Activated CD4-positive, alpha-beta T cell treated with anti-CD3 and anti-CD28 coated beads, Interleukin-2, amount 10 ng/mL, durations not matched to agents 24 days and 14 days (primary cell): ENCODE measurements at regions of chr5 and their contacts with region 1.

Region 1: DNA sequence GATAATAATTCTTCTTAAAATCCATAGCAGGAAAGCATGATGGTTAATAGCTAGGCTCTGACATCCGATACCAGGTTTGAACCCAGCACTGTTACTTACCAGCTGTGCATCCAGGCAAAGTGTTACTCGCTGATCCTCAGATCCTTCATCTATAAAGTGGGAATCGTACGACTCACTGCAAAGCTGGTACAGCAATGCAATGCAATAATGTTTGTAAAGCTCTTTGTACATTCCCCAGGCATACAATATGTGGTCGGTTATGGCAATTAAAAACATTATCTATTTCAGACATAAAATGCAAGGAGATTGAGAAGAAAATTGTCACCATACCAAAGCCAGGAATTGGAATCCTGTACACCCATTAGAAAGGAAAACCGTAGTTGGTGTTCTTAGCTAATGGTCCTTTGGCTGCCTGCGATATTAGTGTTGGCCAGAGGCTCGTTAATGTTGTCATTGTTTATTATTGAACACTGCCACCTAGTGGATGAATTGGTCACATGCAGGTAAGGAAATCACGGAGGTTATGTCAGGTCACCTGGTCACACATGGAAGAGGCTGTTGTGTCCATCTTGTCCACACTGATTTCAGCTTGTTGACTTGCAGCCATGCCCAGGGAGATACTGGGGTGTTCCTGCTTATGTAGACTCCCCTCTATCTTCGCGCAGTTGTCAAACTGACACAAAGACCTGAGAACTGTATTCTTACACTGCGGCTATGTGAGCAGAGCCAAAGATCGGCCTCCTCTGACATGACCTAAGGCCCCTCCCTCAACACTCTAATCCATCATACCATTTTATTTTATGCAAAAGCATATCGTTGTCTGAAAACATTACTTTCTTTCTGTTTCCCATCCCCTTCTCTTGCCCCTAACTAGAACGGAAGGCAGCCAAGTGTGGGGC is 87.5 kb upstream of the PPP2R2B start:
- DNase-seq: peak; percentile 86
- H3K4me3 Mint-ChIP-seq: no peak overlapping the region
- H3K27ac Mint-ChIP-seq: no peak overlapping the region
- H3K4me1 Mint-ChIP-seq: no peaks in the 10 kb centered on the region
- H3K27me3 Mint-ChIP-seq: no peaks in the 10 kb centered on the region

Region 2: DNA sequence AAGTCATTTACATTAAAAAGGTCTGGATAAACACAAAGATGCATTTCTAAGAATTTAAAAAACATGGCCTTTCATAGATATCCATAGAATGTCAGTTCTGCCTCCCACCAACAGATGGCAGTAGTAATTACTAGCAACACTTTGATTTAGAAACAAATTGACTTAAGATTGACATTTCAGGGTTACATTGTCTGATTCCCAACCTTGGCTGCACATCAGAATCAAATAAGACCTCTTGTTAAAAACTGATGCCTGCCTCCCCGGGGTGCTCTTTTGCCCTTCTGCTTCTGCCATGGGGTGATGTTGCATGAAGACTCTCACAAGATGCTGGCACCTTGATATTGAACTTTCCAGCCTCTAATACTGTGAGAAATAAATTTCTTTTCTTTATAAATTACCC is 303.8 kb before region 1 on chr5:
- intact Hi-C with region 1: loop called (anchors 1 kb)
- DNase-seq: peak; percentile 78
- H3K4me3 Mint-ChIP-seq: no peak overlapping the region
- H3K27ac Mint-ChIP-seq: no peak overlapping the region
- H3K4me1 Mint-ChIP-seq: no peaks in the 10 kb centered on the region
- H3K27me3 Mint-ChIP-seq: no peaks in the 10 kb centered on the region

Region 3: DNA sequence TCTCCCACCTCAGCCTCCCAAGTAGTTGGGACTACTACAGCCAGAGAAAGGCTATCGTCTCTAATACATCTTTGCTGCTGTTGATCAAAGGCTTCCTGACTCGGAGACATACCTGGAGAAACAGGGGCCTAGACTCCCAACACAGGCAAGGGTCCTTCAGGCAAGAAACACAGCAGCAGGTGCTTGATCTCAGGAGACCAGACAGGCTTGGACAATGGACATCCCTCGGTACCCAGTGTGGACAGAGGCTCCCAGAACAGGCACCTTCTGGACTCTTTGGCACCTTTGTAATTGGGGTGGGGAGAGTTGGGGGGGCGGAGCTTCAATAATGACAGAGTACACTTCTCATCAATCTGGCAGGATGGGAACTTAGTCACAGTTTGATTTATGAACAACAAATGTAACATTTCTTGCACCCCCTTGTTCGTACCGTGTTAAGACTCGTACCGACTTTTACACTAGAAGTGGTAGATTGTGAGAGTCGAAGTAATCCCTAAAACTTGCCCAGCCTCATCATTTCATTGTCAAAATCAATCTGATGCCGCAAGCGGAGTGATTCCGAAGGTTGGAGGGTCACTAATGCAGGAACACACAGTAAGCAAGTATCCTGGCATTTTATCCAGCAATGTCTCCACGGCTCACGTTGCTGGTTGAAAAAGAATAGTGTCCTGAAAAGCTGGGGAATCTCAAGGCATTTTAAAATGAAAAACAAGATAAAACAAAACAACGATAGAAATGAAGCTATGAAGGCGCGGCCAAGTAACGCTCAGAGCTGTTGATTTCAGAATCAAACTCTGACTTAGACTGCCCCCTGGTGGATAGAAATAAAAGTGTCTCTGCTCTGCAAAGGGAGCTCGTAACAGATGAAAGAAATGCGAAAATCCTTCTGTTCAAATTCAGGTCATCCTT is 222.4 kb after region 1 on chr5:
- intact Hi-C with region 1: loop called (anchors 10 kb)
- DNase-seq: peak; percentile 85
- H3K4me3 Mint-ChIP-seq: no peak overlapping the region
- H3K27ac Mint-ChIP-seq: no peak overlapping the region
- H3K4me1 Mint-ChIP-seq: peaks cover 4% of the 10 kb centered on the region
- H3K27me3 Mint-ChIP-seq: peaks cover 1% of the 10 kb centered on the region